CD4-positive, alpha-beta T cell (primary cell): ENCODE measurements at regions of chr10 and their contacts with region 1.

Region 1: DNA sequence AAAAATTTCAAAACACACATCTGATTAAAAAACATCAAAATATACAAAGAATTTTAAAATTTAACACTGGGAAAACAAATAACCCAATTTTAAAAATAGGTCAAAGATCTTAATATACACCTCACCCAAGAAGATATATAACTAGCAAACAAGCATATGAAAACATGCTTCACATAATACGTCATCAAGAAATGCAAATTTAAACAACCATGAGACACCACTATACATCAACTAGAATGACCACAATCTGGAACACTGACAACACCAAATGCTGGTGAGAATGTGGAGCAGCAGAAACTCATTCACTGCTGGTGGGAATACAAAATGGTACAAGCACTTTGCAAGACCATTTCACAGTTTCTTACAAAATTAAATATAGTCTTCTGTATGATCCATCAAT is 498.4 kb downstream of the IPMK start:
- DNase-seq: no peak
- ATAC-seq: no peak
- H3K4me3 ChIP-seq: no peak overlapping the region
- H3K4me3 Mint-ChIP-seq: no peak overlapping the region
- H3K27ac ChIP-seq: no peak overlapping the region
- H3K27ac Mint-ChIP-seq: no peak overlapping the region
- H3K4me1 ChIP-seq: no peaks in the 10 kb centered on the region
- H3K4me1 Mint-ChIP-seq: no peaks in the 10 kb centered on the region
- H3K27me3 ChIP-seq: no peaks in the 10 kb centered on the region
- H3K27me3 Mint-ChIP-seq: no peaks in the 10 kb centered on the region
- CTCF ChIP-seq: no peak

Region 2: DNA sequence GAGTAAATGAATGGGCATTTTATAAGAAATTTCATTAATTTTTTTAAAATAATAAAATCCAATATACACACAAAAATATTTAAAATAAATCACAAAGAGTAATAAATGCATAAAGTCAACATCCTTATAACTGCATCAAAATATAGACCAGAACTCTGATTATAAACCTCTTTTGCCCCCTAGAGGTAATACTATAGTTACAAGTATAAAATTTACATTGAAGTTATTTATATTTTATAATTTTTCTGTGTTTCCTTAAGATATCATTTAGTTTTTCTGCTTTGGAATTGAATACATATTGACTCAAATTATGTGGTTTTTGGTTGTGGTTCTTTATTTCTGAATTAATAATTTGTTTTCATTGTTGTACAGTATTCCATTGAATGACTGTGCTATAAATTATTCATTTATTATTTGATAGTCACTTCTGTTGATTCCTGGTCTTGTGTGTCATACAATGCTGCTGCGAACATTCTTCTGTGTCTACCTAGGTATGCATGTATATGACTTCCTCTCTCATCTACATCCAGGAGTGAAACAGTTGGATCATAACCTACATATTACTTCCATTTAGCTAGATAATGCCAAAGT is 175.2 kb before region 1 on chr10:
- CTCF ChIA-PET with region 1: no interaction called
- POLR2A ChIA-PET with region 1: no interaction called
- intact Hi-C with region 1: no loop called
- DNase-seq: no peak
- ATAC-seq: no peak
- H3K4me3 ChIP-seq: no peak overlapping the region
- H3K4me3 Mint-ChIP-seq: no peak overlapping the region
- H3K27ac ChIP-seq: no peak overlapping the region
- H3K27ac Mint-ChIP-seq: no peak overlapping the region
- H3K4me1 ChIP-seq: no peaks in the 10 kb centered on the region
- H3K4me1 Mint-ChIP-seq: no peaks in the 10 kb centered on the region
- H3K27me3 ChIP-seq: no peaks in the 10 kb centered on the region
- H3K27me3 Mint-ChIP-seq: no peaks in the 10 kb centered on the region
- CTCF ChIP-seq: no peak

Region 3: GRCh38 chr10:57754803-57755202 is 14.5 kb before region 1 on chr10:
- CTCF ChIA-PET with region 1: no interaction called
- POLR2A ChIA-PET with region 1: no interaction called
- intact Hi-C with region 1: no loop called
- DNase-seq: no peak
- ATAC-seq: no peak
- H3K4me3 ChIP-seq: no peak overlapping the region
- H3K4me3 Mint-ChIP-seq: no peak overlapping the region
- H3K27ac ChIP-seq: no peak overlapping the region
- H3K27ac Mint-ChIP-seq: no peak overlapping the region
- H3K4me1 ChIP-seq: no peaks in the 10 kb centered on the region
- H3K4me1 Mint-ChIP-seq: no peaks in the 10 kb centered on the region
- H3K27me3 ChIP-seq: no peaks in the 10 kb centered on the region
- H3K27me3 Mint-ChIP-seq: no peaks in the 10 kb centered on the region
- CTCF ChIP-seq: no peak

Region 4: GRCh38 chr10:57822965-57823364 is 53.7 kb after region 1 on chr10:
- CTCF ChIA-PET with region 1: no interaction called
- POLR2A ChIA-PET with region 1: no interaction called
- intact Hi-C with region 1: loop called in 1 of 2 experiments (anchors 10 kb)
- DNase-seq: no peak
- ATAC-seq: no peak
- H3K4me3 ChIP-seq: no peak overlapping the region
- H3K4me3 Mint-ChIP-seq: no peak overlapping the region
- H3K27ac ChIP-seq: no peak overlapping the region
- H3K27ac Mint-ChIP-seq: no peak overlapping the region
- H3K4me1 ChIP-seq: no peaks in the 10 kb centered on the region
- H3K4me1 Mint-ChIP-seq: no peaks in the 10 kb centered on the region
- H3K27me3 ChIP-seq: no peaks in the 10 kb centered on the region
- H3K27me3 Mint-ChIP-seq: no peaks in the 10 kb centered on the region
- CTCF ChIP-seq: no peak